Heart right ventricle (tissue), 16 donors: ENCODE measurements at regions of chr10 and their contacts with region 1.

Region 1: GRCh38 chr10:113058523-113058961 is 108.5 kb downstream of the TCF7L2 start:
- DNase-seq: no peak
- ATAC-seq: peak in 1 of 8 donors; percentile 16
- H3K4me3 ChIP-seq: peak overlapping the region in 1 of 10 donors; percentile 31
- H3K27ac ChIP-seq: peak overlapping the region in 4 of 10 donors; percentile 70 to 86 (median 82)
- H3K4me1 ChIP-seq: peaks cover 10 to 79% (median 55%) of the 10 kb centered on the region in 9 donors
- H3K27me3 ChIP-seq: no peaks in the 10 kb centered on the region
- CTCF ChIP-seq: no peak

Region 2: GRCh38 chr10:113027574-113028455 is 30.7 kb before region 1 on chr10:
- intact Hi-C with region 1: loop called in 1 of 10 experiments (anchors 5 kb)
- DNase-seq: no peak
- ATAC-seq: peak; percentile 44 to 65 (median 53)
- H3K4me3 ChIP-seq: peak overlapping the region in 2 of 10 donors; percentile 16 to 26
- H3K27ac ChIP-seq: peak overlapping the region in 8 of 10 donors; percentile 14 to 82 (median 52)
- H3K4me1 ChIP-seq: peaks cover 12 to 52% (median 36%) of the 10 kb centered on the region in 9 donors
- H3K27me3 ChIP-seq: no peaks in the 10 kb centered on the region
- CTCF ChIP-seq: no peak

Region 3: GRCh38 chr10:113041841-113042750 is 16.4 kb before region 1 on chr10:
- intact Hi-C with region 1: no loop called
- DNase-seq: no peak
- ATAC-seq: no peak
- H3K4me3 ChIP-seq: no peak overlapping the region
- H3K27ac ChIP-seq: peak overlapping the region in 1 of 10 donors; percentile 13
- H3K4me1 ChIP-seq: peaks cover 0 to 60% (median 12%) of the 10 kb centered on the region in 9 donors
- H3K27me3 ChIP-seq: no peaks in the 10 kb centered on the region
- CTCF ChIP-seq: no peak

Region 4: GRCh38 chr10:113099431-113100293 is 41.1 kb after region 1 on chr10:
- intact Hi-C with region 1: no loop called
- DNase-seq: no peak
- ATAC-seq: peak in 5 of 8 donors; percentile 23 to 38 (median 26)
- H3K4me3 ChIP-seq: no peak overlapping the region
- H3K27ac ChIP-seq: peak overlapping the region in 1 of 10 donors; percentile 31
- H3K4me1 ChIP-seq: peaks cover 0 to 62% (median 44%) of the 10 kb centered on the region in 9 donors
- H3K27me3 ChIP-seq: no peaks in the 10 kb centered on the region
- CTCF ChIP-seq: no peak

Region 5: GRCh38 chr10:113121153-113121552 is 62.6 kb after region 1 on chr10:
- intact Hi-C with region 1: loop called in 1 of 10 experiments (anchors 5 kb)
- DNase-seq: no peak
- ATAC-seq: no peak
- H3K4me3 ChIP-seq: no peak overlapping the region
- H3K27ac ChIP-seq: no peak overlapping the region
- H3K4me1 ChIP-seq: peaks cover 0 to 7% (median 1%) of the 10 kb centered on the region in 9 donors
- H3K27me3 ChIP-seq: peaks cover 0 to 11% (median 0%) of the 10 kb centered on the region in 7 donors
- CTCF ChIP-seq: no peak